HAP-1 (cell line): ENCODE measurements at regions of chr20 and their contacts with region 1.

Region 1: DNA sequence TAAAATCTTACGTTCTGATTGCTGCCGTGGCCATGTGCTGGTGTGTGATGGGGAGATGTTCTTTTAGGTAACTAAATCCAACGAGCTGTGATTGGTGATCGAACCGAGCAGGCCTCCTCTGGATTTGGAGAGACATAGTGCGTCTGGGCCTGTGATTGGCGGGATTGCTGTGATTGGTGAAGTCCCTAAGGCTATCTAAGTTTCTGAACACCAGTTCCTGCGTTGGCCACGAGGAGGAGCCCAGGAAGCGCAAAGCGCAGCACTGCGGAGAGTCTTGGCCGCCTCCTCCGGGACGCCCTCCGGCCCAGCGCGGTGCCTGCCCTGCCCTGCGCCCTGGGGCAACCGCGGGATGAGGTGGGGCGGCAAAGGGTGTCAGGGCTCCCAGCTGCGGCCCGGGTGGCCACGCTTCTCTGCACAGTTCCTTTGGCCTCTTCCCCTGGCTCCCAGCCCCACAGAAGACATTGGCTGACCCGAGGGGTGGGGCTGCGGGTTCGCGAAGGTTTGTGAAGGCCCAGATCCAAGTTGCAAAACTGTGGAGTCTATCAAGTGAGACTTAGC is 33.0 kb downstream of the HNF4A start:
- DNase-seq: peak; percentile 34 to 81
- H3K4me3 ChIP-seq: no peak overlapping the region
- H3K4me1 ChIP-seq: no peaks in the 10 kb centered on the region
- H3K27me3 ChIP-seq: no peaks in the 10 kb centered on the region

Region 2: DNA sequence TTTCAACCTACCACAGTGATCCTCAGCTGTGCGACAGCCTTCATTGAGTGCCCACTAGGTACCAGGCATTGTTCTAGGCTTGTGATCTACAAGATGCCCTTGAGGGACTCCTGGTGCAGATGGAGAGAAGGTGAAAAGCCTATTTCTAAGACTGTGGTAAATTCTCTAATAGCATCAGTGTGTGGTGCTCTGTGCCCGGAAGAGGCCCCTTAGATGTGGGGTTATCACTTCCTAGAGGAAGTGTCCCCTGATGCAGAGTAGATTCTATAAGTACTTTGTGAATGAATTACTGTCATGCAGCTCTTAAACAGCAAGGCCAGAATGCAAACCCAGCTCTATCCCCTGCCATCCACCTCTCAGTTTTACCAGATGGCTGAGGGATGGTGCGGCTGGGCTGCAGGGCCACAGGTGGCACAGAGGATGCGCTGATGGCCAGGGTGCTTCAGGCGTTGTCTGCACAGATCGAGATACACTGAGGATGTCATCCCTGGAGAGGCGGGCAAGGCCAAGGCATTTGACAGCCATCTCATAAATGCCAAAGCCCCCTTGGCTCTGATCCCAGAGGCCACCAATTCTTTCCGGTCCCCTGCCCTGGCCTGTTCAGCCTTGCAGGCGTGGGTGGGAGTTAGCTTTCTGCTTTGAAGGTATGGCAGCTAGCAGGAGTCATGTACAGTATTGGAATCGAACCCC is 377.1 kb before region 1 on chr20:
- in situ Hi-C with region 1: no loop called
- DNase-seq: no peak
- H3K4me3 ChIP-seq: no peak overlapping the region
- H3K4me1 ChIP-seq: no peaks in the 10 kb centered on the region
- H3K27me3 ChIP-seq: no peaks in the 10 kb centered on the region

Region 3: DNA sequence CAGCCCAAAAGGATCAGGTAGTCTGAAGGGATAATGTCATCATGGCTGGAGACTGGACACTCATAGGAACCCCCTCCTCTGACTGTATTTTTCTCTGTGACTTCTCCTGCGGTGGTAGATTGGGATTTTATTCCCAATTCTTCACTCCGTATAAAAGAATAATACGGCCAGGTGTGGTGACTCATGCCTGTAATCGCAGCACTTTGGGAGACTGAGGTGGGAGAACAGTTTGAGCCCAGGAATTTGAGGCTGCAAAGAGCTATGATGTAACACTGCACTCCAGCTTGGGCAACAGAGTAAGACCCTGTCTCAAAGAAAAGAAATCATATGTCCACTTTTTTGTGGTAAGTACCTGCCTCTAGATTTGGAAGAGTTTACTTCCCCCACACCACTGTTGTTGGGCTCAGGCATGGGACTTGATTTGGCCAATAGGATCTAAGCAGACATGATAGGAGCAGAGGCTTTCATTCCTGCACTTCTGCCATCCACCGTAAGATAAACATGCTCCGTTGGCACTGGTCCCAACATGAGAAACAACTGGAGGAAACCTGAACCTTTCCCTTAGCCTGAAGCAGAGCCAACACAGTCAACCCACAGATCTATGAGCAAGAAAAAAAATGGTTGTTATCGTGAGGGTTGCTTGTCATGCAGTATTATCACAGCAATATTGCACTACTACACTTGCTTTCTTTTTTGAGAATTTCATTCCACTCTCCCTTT is 283.6 kb before region 1 on chr20:
- in situ Hi-C with region 1: loop called (anchors 10 kb)
- DNase-seq: no peak
- H3K4me3 ChIP-seq: no peak overlapping the region
- H3K4me1 ChIP-seq: no peaks in the 10 kb centered on the region
- H3K27me3 ChIP-seq: peaks cover 2% of the 10 kb centered on the region; the same call in 1 of the 2 replicates

Region 4: DNA sequence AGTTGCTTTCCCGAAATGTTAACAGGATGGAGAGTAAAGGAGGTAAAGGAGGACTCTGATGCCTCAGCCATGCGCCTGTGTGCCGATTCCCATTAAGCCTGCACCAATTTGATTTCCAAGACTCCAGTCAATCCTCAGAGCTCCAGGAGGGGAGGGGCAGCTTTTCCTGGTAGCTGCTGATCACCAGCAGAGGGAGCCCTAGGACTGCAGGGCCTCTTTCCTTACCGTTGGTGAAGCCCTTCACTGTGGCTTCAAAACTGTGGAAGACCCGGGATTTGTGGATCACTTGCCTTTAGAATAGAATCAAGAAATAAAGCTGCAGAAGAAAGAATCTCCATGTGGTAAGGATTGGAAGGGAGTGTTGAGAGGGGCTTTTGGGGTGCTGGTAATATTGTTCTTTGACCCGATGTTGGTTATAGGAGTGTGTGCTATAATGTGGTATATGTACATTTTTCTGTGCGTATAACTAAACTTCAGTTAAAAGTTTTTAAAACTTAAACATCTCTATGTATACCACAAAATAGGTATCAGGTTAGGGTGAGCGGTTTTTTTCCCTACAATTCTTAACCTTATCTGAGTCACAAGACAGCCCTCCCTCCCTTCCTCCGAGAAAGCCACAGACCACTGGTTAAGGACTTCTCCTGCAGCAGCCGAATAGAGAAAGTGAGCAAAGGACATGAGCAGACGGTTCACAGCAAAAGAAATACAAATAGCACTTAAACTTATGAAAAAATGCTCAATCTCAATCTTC is 171.0 kb before region 1 on chr20:
- in situ Hi-C with region 1: loop called (anchors 5 kb)
- DNase-seq: peak; percentile 47 to 82
- H3K4me3 ChIP-seq: no peak overlapping the region
- H3K4me1 ChIP-seq: no peaks in the 10 kb centered on the region
- H3K27me3 ChIP-seq: no peaks in the 10 kb centered on the region

Region 5: GRCh38 chr20:44576297-44576696 is 187.8 kb after region 1 on chr20:
- in situ Hi-C with region 1: no loop called
- DNase-seq: no peak
- H3K4me3 ChIP-seq: no peak overlapping the region
- H3K4me1 ChIP-seq: no peaks in the 10 kb centered on the region
- H3K27me3 ChIP-seq: no peaks in the 10 kb centered on the region

Region 6: GRCh38 chr20:44609511-44610312 is 221.2 kb after region 1 on chr20:
- in situ Hi-C with region 1: loop called (anchors 5 kb)
- DNase-seq: peak; percentile 93 to 95
- H3K4me3 ChIP-seq: no peak overlapping the region
- H3K4me1 ChIP-seq: peaks cover 3% of the 10 kb centered on the region
- H3K27me3 ChIP-seq: no peaks in the 10 kb centered on the region